ENCODE measurements at regions of chr12 and their contacts with region 1.

Region 1: DNA sequence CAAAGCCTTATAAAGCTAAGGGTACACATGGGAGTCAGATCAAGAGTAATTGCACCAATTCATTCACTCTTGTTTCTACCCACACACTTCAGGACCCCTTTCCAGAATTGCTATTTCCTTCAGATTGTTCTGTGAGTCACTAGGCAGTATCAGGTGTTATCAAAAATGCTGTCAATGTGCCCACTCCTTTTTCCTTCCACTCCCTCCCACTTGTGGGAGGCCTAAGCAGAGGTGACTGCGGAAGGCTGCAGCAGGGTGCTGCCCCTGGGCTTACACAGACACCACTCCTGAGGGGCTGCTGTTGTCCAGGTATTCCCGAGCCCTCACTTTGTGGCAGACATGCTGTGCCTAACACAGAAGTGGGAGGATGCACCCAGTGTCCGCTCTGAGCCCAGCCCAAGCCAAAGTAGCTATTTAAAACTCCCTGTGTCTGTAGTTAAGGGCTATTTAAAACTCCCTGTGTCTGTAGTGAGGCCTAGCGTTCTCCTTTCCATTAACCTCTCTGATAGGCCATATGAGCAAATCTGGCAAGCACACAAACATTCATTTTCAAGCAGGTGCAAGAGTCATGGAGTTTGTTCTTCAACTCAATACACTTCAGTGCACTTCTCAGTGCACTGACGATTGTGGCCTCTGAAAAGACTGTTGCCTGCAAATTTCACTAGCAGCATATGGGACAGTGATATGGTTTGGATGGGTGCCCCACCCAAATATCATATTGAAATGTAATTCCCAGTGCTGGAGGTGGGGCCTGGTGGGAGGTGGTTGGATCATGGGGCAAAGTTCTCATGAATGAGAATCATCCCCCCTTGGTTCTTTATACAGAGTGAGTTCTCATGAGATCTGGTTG is 117.8 kb downstream of the PHLDA1 start:
- DNase-seq: no peak
- ATAC-seq: no peak
- H3K4me3 Mint-ChIP-seq: no peak overlapping the region
- H3K27ac Mint-ChIP-seq: no peak overlapping the region
- H3K4me1 Mint-ChIP-seq: peaks cover 19% of the 10 kb centered on the region
- H3K27me3 Mint-ChIP-seq: peaks cover 7% of the 10 kb centered on the region
- CTCF ChIP-seq: no peak

Region 2: GRCh38 chr12:75526655-75527511 is 386.8 kb before region 1 on chr12:
- CTCF ChIA-PET with region 1: no interaction called
- POLR2A ChIA-PET with region 1: no interaction called
- intact Hi-C with region 1: loop called (anchors 10 kb)
- DNase-seq: no peak
- ATAC-seq: peak; percentile 74
- H3K4me3 Mint-ChIP-seq: no peak overlapping the region
- H3K27ac Mint-ChIP-seq: no peak overlapping the region
- H3K4me1 Mint-ChIP-seq: peaks cover 6% of the 10 kb centered on the region
- H3K27me3 Mint-ChIP-seq: peaks cover 31% of the 10 kb centered on the region
- CTCF ChIP-seq: no peak

Region 3: GRCh38 chr12:75876843-75877762 is 36.6 kb before region 1 on chr12:
- CTCF ChIA-PET with region 1: no interaction called
- POLR2A ChIA-PET with region 1: no interaction called
- intact Hi-C with region 1: no loop called
- DNase-seq: no peak
- ATAC-seq: no peak
- H3K4me3 Mint-ChIP-seq: no peak overlapping the region
- H3K27ac Mint-ChIP-seq: no peak overlapping the region
- H3K4me1 Mint-ChIP-seq: no peaks in the 10 kb centered on the region
- H3K27me3 Mint-ChIP-seq: peaks cover 22% of the 10 kb centered on the region
- CTCF ChIP-seq: no peak

Region 4: DNA sequence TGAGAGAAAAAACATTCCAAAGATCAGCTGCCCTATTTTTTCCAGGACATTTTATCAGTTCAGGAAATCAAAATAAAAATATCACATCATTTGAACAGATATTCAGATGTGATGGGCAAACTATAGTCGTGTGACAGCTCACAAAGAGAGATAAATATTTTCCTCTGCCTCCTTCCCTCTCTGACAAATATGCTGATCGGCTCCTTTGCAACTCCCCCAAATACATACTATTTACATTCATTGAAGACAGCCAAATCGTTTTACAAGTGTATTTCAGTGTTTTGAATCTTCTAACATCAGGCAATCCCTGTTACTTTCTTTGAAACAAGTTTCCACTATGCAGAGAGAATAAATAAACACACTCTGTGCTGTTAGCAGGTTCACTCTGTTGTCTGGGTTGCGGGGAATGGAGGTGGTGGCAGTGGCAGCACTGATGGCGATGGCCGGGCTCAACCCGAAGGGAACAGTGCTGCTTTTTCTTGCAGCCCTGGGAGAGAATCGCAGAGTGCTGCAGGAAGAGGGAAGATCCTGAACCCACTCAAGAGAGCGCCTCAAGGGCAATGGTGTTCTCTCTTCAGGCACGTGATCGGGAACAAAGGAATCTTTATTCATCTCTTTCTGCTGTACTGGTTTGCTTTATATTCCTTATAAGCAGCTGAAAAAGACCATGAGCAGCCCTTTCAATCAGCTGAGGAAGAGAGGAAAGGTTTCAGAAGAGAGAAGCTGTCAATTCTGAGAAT is 24.7 kb before region 1 on chr12:
- CTCF ChIA-PET with region 1: no interaction called
- POLR2A ChIA-PET with region 1: no interaction called
- intact Hi-C with region 1: no loop called
- DNase-seq: no peak
- ATAC-seq: no peak
- H3K4me3 Mint-ChIP-seq: no peak overlapping the region
- H3K27ac Mint-ChIP-seq: no peak overlapping the region
- H3K4me1 Mint-ChIP-seq: no peaks in the 10 kb centered on the region
- H3K27me3 Mint-ChIP-seq: peaks cover 16% of the 10 kb centered on the region
- CTCF ChIP-seq: no peak

Region 5: DNA sequence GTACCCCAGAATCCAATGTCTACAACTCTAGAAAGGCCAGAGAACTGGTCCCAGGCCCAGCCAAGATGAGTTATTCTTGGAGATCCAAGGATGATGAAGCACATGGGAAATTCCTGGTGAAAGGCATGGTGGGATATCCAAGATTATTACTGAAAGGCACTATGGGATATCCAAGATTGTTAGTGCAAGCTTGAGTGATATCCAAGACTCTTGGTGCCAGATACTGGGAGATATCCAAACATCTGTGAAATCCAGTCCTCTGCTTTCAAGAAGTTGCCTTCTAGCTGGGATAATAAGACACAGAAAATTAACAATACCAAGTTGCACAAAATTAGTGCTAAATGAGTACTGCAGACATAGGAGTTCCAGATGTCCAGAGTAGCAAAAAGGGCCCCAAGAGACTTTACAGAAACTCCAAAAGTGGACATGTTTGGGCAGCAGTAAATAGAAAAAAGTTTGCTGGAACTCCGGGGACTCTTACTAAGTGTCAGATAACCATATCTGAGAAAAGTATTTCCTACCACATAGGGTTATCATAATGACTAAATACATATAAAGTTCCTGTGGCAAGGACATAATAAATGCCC is 83.2 kb after region 1 on chr12:
- CTCF ChIA-PET with region 1: no interaction called
- POLR2A ChIA-PET with region 1: no interaction called
- intact Hi-C with region 1: no loop called
- DNase-seq: no peak
- ATAC-seq: no peak
- H3K4me3 Mint-ChIP-seq: no peak overlapping the region
- H3K27ac Mint-ChIP-seq: no peak overlapping the region
- H3K4me1 Mint-ChIP-seq: no peaks in the 10 kb centered on the region
- H3K27me3 Mint-ChIP-seq: peaks cover 6% of the 10 kb centered on the region
- CTCF ChIP-seq: no peak